GM12878 (cell line): ENCODE measurements at regions of chr7 and their contacts with region 1.

Region 1: GRCh38 chr7:33423646-33424020 is 294.3 kb downstream of the BBS9 start:
- DNase-seq: peak; percentile 24
- ATAC-seq: peak; percentile 94
- H3K4me3 ChIP-seq: no peak overlapping the region
- H3K27ac ChIP-seq: no peak overlapping the region
- H3K4me1 ChIP-seq: peaks cover 5% of the 10 kb centered on the region
- H3K27me3 ChIP-seq: no peaks in the 10 kb centered on the region
- CTCF ChIP-seq: peak; percentile 47 to 71 (median 59); a peak in 5 of 6 replicates
- EP300 ChIP-seq: no peak
- POLR2A ChIP-seq: no peak
- RAD21 ChIP-seq: peak; percentile 71

Region 2: DNA sequence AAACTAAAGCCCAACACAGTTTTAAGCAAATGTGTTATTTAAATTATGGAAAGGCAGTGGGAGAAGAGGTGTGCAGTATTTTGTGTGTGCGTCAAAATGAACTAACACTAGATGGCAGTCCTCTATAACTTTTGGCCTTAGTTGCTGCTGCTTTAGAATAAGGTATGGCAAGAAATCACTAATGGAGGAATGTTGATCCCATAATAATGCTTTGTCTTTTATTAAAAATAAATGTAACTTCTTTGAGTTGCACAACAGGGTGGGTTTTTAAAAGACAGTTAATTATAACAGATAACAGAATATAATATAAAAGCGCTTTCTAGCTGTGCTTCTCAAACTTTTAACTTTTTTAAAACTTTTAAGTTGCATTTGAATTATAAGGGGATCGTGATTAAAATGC is 237.8 kb before region 1 on chr7:
- CTCF ChIA-PET with region 1: interaction called, 5 read pairs
- POLR2A ChIA-PET with region 1: no interaction called
- RAD21 ChIA-PET with region 1: no interaction called
- SMC1A ChIA-PET with region 1: no interaction called
- in situ Hi-C with region 1: no loop called
- intact Hi-C with region 1: loop called (anchors 5 kb)
- DNase-seq: no peak
- ATAC-seq: peak; percentile 84
- H3K4me3 ChIP-seq: no peak overlapping the region
- H3K27ac ChIP-seq: no peak overlapping the region
- H3K4me1 ChIP-seq: no peaks in the 10 kb centered on the region
- H3K27me3 ChIP-seq: no peaks in the 10 kb centered on the region
- CTCF ChIP-seq: peak; percentile 51 to 85 (median 66); a peak in 4 of 6 replicates
- EP300 ChIP-seq: no peak
- POLR2A ChIP-seq: no peak
- RAD21 ChIP-seq: peak; percentile 80

Region 3: GRCh38 chr7:33243319-33243881 is 180.2 kb before region 1 on chr7:
- CTCF ChIA-PET with region 1: interaction called, 8 read pairs
- POLR2A ChIA-PET with region 1: no interaction called
- RAD21 ChIA-PET with region 1: no interaction called
- SMC1A ChIA-PET with region 1: interaction called, 5 read pairs
- in situ Hi-C with region 1: no loop called
- intact Hi-C with region 1: loop called (anchors 10 kb)
- DNase-seq: no peak
- ATAC-seq: peak; percentile 57
- H3K4me3 ChIP-seq: no peak overlapping the region
- H3K27ac ChIP-seq: no peak overlapping the region
- H3K4me1 ChIP-seq: no peaks in the 10 kb centered on the region
- H3K27me3 ChIP-seq: no peaks in the 10 kb centered on the region
- CTCF ChIP-seq: peak; percentile 34 to 59 (median 44); a peak in 4 of 6 replicates
- EP300 ChIP-seq: no peak
- POLR2A ChIP-seq: no peak
- RAD21 ChIP-seq: peak; percentile 71

Region 4: GRCh38 chr7:33369888-33370287 is 53.7 kb before region 1 on chr7:
- CTCF ChIA-PET with region 1: no interaction called
- POLR2A ChIA-PET with region 1: no interaction called
- RAD21 ChIA-PET with region 1: no interaction called
- SMC1A ChIA-PET with region 1: no interaction called
- in situ Hi-C with region 1: no loop called
- intact Hi-C with region 1: no loop called
- DNase-seq: no peak
- ATAC-seq: peak; percentile 58
- H3K4me3 ChIP-seq: no peak overlapping the region
- H3K27ac ChIP-seq: no peak overlapping the region
- H3K4me1 ChIP-seq: no peaks in the 10 kb centered on the region
- H3K27me3 ChIP-seq: no peaks in the 10 kb centered on the region
- CTCF ChIP-seq: no peak
- EP300 ChIP-seq: no peak
- POLR2A ChIP-seq: no peak
- RAD21 ChIP-seq: no peak

Region 5: DNA sequence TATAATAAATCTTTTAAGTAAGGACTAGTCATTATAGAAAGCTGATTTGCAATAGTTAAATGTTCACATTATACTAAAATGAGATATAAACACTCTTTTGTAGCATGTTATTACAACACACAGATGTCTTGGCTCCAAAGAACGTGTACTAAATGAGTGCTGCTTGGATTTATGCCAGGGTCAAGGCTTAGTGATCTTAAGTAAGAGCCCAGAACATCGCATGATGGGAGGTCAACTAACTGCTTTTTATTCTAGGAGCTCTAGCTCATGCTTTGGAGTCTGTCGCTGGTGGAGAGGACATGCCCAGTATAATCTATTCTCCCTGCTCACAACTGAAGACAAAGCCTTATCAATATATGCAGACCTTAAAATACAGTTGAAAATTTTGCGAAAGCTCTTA is 20.9 kb after region 1 on chr7:
- CTCF ChIA-PET with region 1: interaction called, 10 read pairs
- POLR2A ChIA-PET with region 1: no interaction called
- RAD21 ChIA-PET with region 1: interaction called, 3 read pairs
- SMC1A ChIA-PET with region 1: interaction called, 4 read pairs
- in situ Hi-C with region 1: no loop called
- intact Hi-C with region 1: no loop called
- DNase-seq: no peak
- ATAC-seq: no peak
- H3K4me3 ChIP-seq: no peak overlapping the region
- H3K27ac ChIP-seq: no peak overlapping the region
- H3K4me1 ChIP-seq: no peaks in the 10 kb centered on the region
- H3K27me3 ChIP-seq: no peaks in the 10 kb centered on the region
- CTCF ChIP-seq: no peak
- EP300 ChIP-seq: no peak
- POLR2A ChIP-seq: no peak
- RAD21 ChIP-seq: no peak

Region 6: GRCh38 chr7:33459340-33459751 is 35.7 kb after region 1 on chr7:
- CTCF ChIA-PET with region 1: interaction called, 17 read pairs
- POLR2A ChIA-PET with region 1: no interaction called
- RAD21 ChIA-PET with region 1: interaction called, 5 read pairs
- SMC1A ChIA-PET with region 1: interaction called, 6 read pairs
- in situ Hi-C with region 1: no loop called
- intact Hi-C with region 1: no loop called
- DNase-seq: no peak
- ATAC-seq: peak; percentile 93
- H3K4me3 ChIP-seq: no peak overlapping the region
- H3K27ac ChIP-seq: no peak overlapping the region
- H3K4me1 ChIP-seq: no peaks in the 10 kb centered on the region
- H3K27me3 ChIP-seq: no peaks in the 10 kb centered on the region
- CTCF ChIP-seq: peak; percentile 30 to 58 (median 56); a peak in 5 of 6 replicates
- EP300 ChIP-seq: no peak
- POLR2A ChIP-seq: no peak
- RAD21 ChIP-seq: peak; percentile 69

Region 7: GRCh38 chr7:33471636-33472242 is 48.1 kb after region 1 on chr7:
- CTCF ChIA-PET with region 1: no interaction called
- POLR2A ChIA-PET with region 1: no interaction called
- RAD21 ChIA-PET with region 1: no interaction called
- SMC1A ChIA-PET with region 1: no interaction called
- in situ Hi-C with region 1: no loop called
- intact Hi-C with region 1: no loop called
- DNase-seq: no peak
- ATAC-seq: peak; percentile 72
- H3K4me3 ChIP-seq: no peak overlapping the region
- H3K27ac ChIP-seq: no peak overlapping the region
- H3K4me1 ChIP-seq: no peaks in the 10 kb centered on the region
- H3K27me3 ChIP-seq: no peaks in the 10 kb centered on the region
- CTCF ChIP-seq: no peak
- EP300 ChIP-seq: no peak
- POLR2A ChIP-seq: no peak
- RAD21 ChIP-seq: no peak

Region 8: GRCh38 chr7:33744293-33745075 is 320.9 kb after region 1 on chr7:
- CTCF ChIA-PET with region 1: interaction called, 5 read pairs
- POLR2A ChIA-PET with region 1: no interaction called
- RAD21 ChIA-PET with region 1: interaction called, 3 read pairs
- SMC1A ChIA-PET with region 1: interaction called, 4 read pairs
- in situ Hi-C with region 1: no loop called
- intact Hi-C with region 1: loop called (anchors 5 kb)
- DNase-seq: no peak
- ATAC-seq: peak; percentile 82
- H3K4me3 ChIP-seq: no peak overlapping the region
- H3K27ac ChIP-seq: no peak overlapping the region
- H3K4me1 ChIP-seq: no peaks in the 10 kb centered on the region
- H3K27me3 ChIP-seq: no peaks in the 10 kb centered on the region; a peak in 1 of 4 replicates
- CTCF ChIP-seq: peak; percentile 27 to 47 (median 32); a peak in 4 of 6 replicates
- EP300 ChIP-seq: no peak
- POLR2A ChIP-seq: no peak
- RAD21 ChIP-seq: peak; percentile 60

Region 9: GRCh38 chr7:34036051-34036945 is 612.7 kb after region 1 on chr7:
- CTCF ChIA-PET with region 1: no interaction called
- POLR2A ChIA-PET with region 1: no interaction called
- RAD21 ChIA-PET with region 1: no interaction called
- SMC1A ChIA-PET with region 1: no interaction called
- in situ Hi-C with region 1: no loop called
- intact Hi-C with region 1: no loop called
- DNase-seq: no peak
- ATAC-seq: no peak
- H3K4me3 ChIP-seq: no peak overlapping the region
- H3K27ac ChIP-seq: no peak overlapping the region
- H3K4me1 ChIP-seq: no peaks in the 10 kb centered on the region
- H3K27me3 ChIP-seq: no peaks in the 10 kb centered on the region
- CTCF ChIP-seq: no peak
- EP300 ChIP-seq: no peak
- POLR2A ChIP-seq: no peak
- RAD21 ChIP-seq: no peak